HepG2 (cell line): ENCODE measurements at regions of chr9 and their contacts with region 1.

Region 1: DNA sequence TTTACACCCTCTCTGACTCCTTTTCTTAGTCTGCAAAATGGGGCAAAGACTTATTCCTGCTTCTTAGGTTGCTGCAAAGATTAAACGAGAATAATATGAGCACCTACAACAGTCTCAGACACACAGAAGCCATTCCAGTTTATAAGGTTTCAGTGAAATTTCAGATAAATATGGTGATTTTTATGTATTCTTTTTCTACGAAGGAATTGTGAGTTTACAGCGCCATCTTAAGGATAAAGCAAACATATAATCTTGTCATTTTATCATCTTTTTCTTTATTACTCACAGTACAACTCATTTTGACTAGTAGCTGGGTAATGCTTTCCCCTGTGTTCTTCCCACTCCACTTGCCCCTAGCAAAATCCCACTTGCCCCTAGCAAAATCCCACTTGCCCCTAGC is 29.2 kb upstream of the SMC5 start:
- DNase-seq: no peak
- ATAC-seq: no peak
- H3K4me3 ChIP-seq: no peak overlapping the region
- H3K27ac ChIP-seq: no peak overlapping the region
- H3K4me1 ChIP-seq: peaks cover 13% of the 10 kb centered on the region; the same call in 1 of the 2 replicates
- H3K27me3 ChIP-seq: no peaks in the 10 kb centered on the region
- CTCF ChIP-seq: peak; percentile 47
- EP300 ChIP-seq: no peak
- POLR2A ChIP-seq: no peak
- RAD21 ChIP-seq: no peak

Region 2: GRCh38 chr9:69971643-69972449 is 257.7 kb before region 1 on chr9:
- CTCF ChIA-PET with region 1: interaction called, 3 read pairs
- POLR2A ChIA-PET with region 1: no interaction called
- in situ Hi-C with region 1: loop called (anchors 10 kb)
- intact Hi-C with region 1: loop called (anchors 1 kb)
- DNase-seq: peak; percentile 27
- ATAC-seq: peak; percentile 91
- H3K4me3 ChIP-seq: no peak overlapping the region
- H3K27ac ChIP-seq: no peak overlapping the region
- H3K4me1 ChIP-seq: no peaks in the 10 kb centered on the region
- H3K27me3 ChIP-seq: peaks cover 3 to 13% of the 10 kb centered on the region in 2 experiments; a peak in 2 of 5 replicates
- CTCF ChIP-seq: peak; percentile 90
- EP300 ChIP-seq: no peak
- POLR2A ChIP-seq: no peak
- RAD21 ChIP-seq: peak; percentile 65

Region 3: GRCh38 chr9:70111042-70111602 is 118.5 kb before region 1 on chr9:
- CTCF ChIA-PET with region 1: no interaction called
- POLR2A ChIA-PET with region 1: no interaction called
- in situ Hi-C with region 1: no loop called
- intact Hi-C with region 1: loop called (anchors 5 kb)
- DNase-seq: peak; percentile 31
- ATAC-seq: peak; percentile 80
- H3K4me3 ChIP-seq: no peak overlapping the region
- H3K27ac ChIP-seq: no peak overlapping the region
- H3K4me1 ChIP-seq: peaks cover 28% of the 10 kb centered on the region
- H3K27me3 ChIP-seq: peaks cover 0 to 12% of the 10 kb centered on the region in 2 experiments; a peak in 2 of 5 replicates
- CTCF ChIP-seq: peak; percentile 79
- EP300 ChIP-seq: no peak
- POLR2A ChIP-seq: no peak
- RAD21 ChIP-seq: no peak